Endothelial cell of umbilical vein (primary cell): ENCODE measurements at regions of chr6 and their contacts with region 1.

Region 1: DNA sequence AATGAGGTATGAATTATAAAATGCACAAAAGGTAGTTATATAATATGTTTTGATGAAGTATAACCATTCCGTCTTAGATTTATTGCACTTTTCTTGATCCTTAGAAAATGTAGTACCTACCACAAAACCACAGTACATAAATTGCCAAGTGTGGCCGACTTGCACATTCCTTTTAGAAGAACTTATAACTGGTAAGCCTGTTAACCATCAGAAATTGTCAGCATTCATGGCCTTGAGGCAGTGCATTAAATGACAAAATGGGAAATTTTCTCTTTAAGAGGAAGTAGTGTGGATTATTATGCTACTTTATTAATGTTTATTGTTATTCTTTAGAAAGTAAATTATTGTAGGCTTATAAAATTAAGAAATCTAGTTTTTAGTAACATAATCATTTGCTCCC is 29.6 kb downstream of the TAB2 start:
- DNase-seq: no peak
- H3K4me3 ChIP-seq: no peak overlapping the region
- H3K27ac ChIP-seq: no peak overlapping the region
- H3K4me1 ChIP-seq: no peaks in the 10 kb centered on the region
- H3K27me3 ChIP-seq: no peaks in the 10 kb centered on the region
- CTCF ChIP-seq: no peak
- POLR2A ChIP-seq: no peak

Region 2: GRCh38 chr6:149373511-149373910 is 26.4 kb after region 1 on chr6:
- CTCF ChIA-PET with region 1: interaction called, 3 read pairs
- POLR2A ChIA-PET with region 1: no interaction called
- dilution Hi-C with region 1: no loop called
- intact Hi-C with region 1: loop called (anchors 2 kb)
- DNase-seq: no peak
- H3K4me3 ChIP-seq: no peak overlapping the region
- H3K27ac ChIP-seq: no peak overlapping the region
- H3K4me1 ChIP-seq: no peaks in the 10 kb centered on the region
- H3K27me3 ChIP-seq: no peaks in the 10 kb centered on the region
- CTCF ChIP-seq: no peak
- POLR2A ChIP-seq: no peak

Region 3: DNA sequence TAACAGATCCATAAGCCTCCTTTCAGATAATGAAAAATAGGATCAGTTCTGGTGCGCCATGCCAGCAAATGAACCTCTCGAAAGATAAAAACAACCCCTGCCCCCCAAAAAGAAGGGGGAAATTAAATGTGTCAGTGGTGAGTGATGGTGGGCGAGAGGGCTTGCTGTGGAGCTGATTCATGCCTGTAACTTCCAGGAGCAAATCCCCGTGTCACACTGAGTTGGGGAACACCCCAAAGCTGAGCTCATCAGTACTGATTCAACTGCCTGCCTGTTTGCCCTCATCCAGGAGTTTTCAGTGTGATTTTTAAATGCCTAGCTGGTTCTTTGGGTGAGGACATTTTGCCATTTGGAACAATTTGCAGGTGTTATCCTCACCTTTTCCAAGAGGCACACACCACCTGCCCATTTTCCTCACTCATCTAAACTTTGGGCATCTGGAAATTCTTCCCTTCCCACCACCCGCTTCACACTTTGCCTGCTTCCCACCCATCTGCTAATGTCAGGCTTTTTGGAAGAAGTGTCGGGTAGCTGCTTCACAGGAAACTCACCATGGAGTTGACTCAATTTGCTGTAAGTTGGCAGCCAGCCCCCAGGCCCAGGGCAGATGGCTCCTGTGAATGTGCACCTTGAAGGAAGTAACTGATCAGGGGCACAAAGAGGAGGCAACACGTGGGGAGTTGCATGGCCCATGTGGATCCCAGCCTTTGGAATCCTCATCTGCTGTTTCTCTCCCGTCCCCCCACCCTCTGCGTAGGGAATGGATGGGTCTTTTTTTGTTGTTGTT is 882.9 kb after region 1 on chr6:
- CTCF ChIA-PET with region 1: no interaction called
- POLR2A ChIA-PET with region 1: no interaction called
- dilution Hi-C with region 1: no loop called
- intact Hi-C with region 1: no loop called
- DNase-seq: no peak
- H3K4me3 ChIP-seq: no peak overlapping the region
- H3K27ac ChIP-seq: no peak overlapping the region
- H3K4me1 ChIP-seq: no peaks in the 10 kb centered on the region
- H3K27me3 ChIP-seq: peaks cover 0 to 4% of the 10 kb centered on the region in 2 experiments
- CTCF ChIP-seq: no peak
- POLR2A ChIP-seq: no peak

Region 4: GRCh38 chr6:150586850-150587359 is 1239.8 kb after region 1 on chr6:
- CTCF ChIA-PET with region 1: no interaction called
- POLR2A ChIA-PET with region 1: no interaction called
- dilution Hi-C with region 1: no loop called
- intact Hi-C with region 1: no loop called
- DNase-seq: no peak
- H3K4me3 ChIP-seq: no peak overlapping the region
- H3K27ac ChIP-seq: no peak overlapping the region
- H3K4me1 ChIP-seq: no peaks in the 10 kb centered on the region
- H3K27me3 ChIP-seq: peaks cover 5 to 9% of the 10 kb centered on the region in 2 experiments
- CTCF ChIP-seq: no peak
- POLR2A ChIP-seq: no peak